Transverse colon (tissue), 4 donors: ENCODE measurements at regions of chr4 and their contacts with region 1.

Region 1: GRCh38 chr4:121370729-121371325 is 10.0 kb downstream of the QRFPR start:
- DNase-seq: peak; percentile 11
- H3K4me3 ChIP-seq: no peak overlapping the region
- H3K27ac ChIP-seq: no peak overlapping the region
- H3K4me1 ChIP-seq: no peaks in the 10 kb centered on the region
- H3K27me3 ChIP-seq: no peaks in the 10 kb centered on the region
- CTCF ChIP-seq: peak; percentile 46 to 60 (median 50)
- EP300 ChIP-seq: no peak
- POLR2A ChIP-seq: no peak

Region 2: GRCh38 chr4:120672558-120673147 is 698.2 kb before region 1 on chr4:
- in situ Hi-C with region 1: no loop called
- intact Hi-C with region 1: no loop called
- DNase-seq: no peak
- H3K4me3 ChIP-seq: no peak overlapping the region
- H3K27ac ChIP-seq: no peak overlapping the region
- H3K4me1 ChIP-seq: no peaks in the 10 kb centered on the region
- H3K27me3 ChIP-seq: no peaks in the 10 kb centered on the region
- CTCF ChIP-seq: no peak
- EP300 ChIP-seq: no peak
- POLR2A ChIP-seq: no peak

Region 3: DNA sequence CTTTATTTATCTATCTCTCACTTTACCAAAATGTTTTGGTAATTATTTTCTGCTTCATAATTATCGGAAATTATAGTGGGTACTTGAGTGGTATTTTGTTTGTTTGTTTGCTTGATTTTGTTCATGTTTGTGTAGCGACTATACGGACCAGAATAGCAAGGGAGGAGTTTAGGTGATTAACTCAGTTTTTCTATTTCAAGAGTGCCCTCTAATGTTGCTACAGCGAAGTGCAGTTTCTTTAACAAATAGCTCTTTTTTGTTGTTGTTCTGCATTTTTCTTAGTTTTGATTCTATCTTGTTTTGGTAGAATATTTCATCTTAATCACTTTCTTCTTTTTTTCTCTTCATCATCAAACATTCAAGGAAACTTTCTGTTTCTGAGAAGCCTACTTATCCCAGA is 50.8 kb after region 1 on chr4:
- in situ Hi-C with region 1: no loop called
- intact Hi-C with region 1: loop called (anchors 5 kb)
- DNase-seq: no peak
- H3K4me3 ChIP-seq: no peak overlapping the region
- H3K27ac ChIP-seq: no peak overlapping the region
- H3K4me1 ChIP-seq: no peaks in the 10 kb centered on the region
- H3K27me3 ChIP-seq: no peaks in the 10 kb centered on the region
- CTCF ChIP-seq: peak in 2 of 5 experiments; percentile 20 to 23
- EP300 ChIP-seq: no peak
- POLR2A ChIP-seq: no peak

Region 4: DNA sequence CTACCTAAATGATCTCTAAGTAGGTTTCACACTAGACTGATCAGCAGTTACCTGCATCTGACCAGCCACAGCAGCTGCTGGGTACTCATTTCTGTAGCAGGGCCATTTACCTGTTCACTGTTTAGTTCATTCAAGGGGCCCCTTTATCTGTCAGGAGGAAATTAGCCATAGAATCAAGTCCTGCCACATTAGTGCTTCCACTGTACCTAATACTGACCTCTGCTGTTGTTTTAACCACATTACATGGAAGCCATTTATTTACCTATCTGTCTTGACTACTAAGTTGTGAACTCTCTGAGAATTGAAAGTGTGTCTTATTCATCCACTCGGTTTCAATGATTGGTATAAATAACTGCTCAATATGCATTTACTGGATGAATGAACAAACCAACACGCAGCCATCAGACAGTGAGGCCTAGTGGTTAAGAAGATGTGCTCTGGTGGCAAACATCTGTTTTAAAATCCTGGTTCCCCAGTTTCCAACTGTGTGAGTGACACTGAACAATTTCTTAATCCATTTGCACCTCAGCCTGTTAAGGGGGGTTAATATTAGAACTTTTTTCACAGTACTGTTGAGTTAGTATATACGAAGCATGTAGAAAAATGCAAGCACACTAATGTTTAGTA is 355.9 kb after region 1 on chr4:
- in situ Hi-C with region 1: loop called in 3 of 4 experiments (anchors 10 to 25 kb)
- intact Hi-C with region 1: no loop called
- DNase-seq: no peak
- H3K4me3 ChIP-seq: no peak overlapping the region
- H3K27ac ChIP-seq: no peak overlapping the region
- H3K4me1 ChIP-seq: peaks cover 0 to under 1% (median 0%) of the 10 kb centered on the region in 4 donors
- H3K27me3 ChIP-seq: no peaks in the 10 kb centered on the region
- CTCF ChIP-seq: peak; percentile 61 to 69 (median 64)
- EP300 ChIP-seq: no peak
- POLR2A ChIP-seq: no peak

Region 5: DNA sequence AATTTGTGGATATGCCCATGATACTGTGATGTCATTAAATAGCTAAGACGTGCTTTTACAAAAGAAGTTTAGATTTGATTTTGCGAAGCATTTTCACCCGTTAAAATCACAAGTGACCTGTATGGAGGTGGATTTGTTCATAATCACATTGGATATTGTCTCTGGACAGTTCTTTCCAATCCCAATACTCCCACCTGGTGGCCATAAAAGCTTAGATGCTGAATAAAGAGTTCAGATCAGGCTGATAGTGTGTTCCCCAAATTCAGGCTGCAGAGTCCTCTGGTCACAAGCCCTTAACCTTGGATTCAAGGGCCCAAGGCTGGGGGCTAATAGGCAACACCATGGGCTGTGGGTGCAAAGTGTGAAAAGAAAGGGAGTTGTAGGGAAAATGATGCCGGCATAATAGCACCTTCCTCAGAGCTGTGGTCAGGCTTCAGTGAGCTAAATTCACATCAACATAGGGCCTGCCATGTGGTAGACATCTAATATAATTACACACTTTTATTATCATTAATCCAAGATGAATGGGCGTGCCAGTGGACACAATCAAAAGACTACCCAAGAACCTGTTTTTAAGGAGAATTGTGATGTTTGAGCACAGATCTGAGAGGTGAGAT is 366.0 kb after region 1 on chr4:
- in situ Hi-C with region 1: loop called in 2 of 4 experiments (anchors 10 to 25 kb)
- intact Hi-C with region 1: no loop called
- DNase-seq: no peak
- H3K4me3 ChIP-seq: no peak overlapping the region
- H3K27ac ChIP-seq: no peak overlapping the region
- H3K4me1 ChIP-seq: no peaks in the 10 kb centered on the region
- H3K27me3 ChIP-seq: no peaks in the 10 kb centered on the region
- CTCF ChIP-seq: peak; percentile 25 to 42 (median 32)
- EP300 ChIP-seq: no peak
- POLR2A ChIP-seq: no peak

Region 6: DNA sequence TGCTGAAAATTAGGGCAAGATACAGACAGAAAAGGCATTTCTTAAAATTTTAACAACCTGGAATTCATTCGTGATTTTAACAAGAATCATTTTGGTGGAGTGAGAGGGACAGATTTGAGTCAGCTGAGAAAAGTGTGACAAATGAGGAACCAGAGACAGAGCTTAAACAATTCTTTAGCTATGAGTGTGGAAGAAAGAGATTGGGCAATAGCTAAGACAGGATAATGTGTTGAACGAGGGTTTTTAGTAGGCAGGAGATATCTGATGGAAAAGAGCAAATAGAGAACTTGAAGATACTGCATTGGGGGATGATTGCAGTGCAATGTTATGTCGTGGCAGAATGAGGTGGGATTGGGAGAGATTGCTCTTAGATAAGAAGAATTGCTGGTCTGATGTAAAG is 1861.6 kb after region 1 on chr4:
- in situ Hi-C with region 1: no loop called
- intact Hi-C with region 1: no loop called
- DNase-seq: no peak
- H3K4me3 ChIP-seq: no peak overlapping the region
- H3K27ac ChIP-seq: no peak overlapping the region
- H3K4me1 ChIP-seq: peaks cover 0 to 13% (median 5%) of the 10 kb centered on the region in 4 donors
- H3K27me3 ChIP-seq: no peaks in the 10 kb centered on the region
- CTCF ChIP-seq: no peak
- EP300 ChIP-seq: no peak
- POLR2A ChIP-seq: no peak